ENCODE measurements at regions of chr20 and their contacts with region 1.

Region 1: DNA sequence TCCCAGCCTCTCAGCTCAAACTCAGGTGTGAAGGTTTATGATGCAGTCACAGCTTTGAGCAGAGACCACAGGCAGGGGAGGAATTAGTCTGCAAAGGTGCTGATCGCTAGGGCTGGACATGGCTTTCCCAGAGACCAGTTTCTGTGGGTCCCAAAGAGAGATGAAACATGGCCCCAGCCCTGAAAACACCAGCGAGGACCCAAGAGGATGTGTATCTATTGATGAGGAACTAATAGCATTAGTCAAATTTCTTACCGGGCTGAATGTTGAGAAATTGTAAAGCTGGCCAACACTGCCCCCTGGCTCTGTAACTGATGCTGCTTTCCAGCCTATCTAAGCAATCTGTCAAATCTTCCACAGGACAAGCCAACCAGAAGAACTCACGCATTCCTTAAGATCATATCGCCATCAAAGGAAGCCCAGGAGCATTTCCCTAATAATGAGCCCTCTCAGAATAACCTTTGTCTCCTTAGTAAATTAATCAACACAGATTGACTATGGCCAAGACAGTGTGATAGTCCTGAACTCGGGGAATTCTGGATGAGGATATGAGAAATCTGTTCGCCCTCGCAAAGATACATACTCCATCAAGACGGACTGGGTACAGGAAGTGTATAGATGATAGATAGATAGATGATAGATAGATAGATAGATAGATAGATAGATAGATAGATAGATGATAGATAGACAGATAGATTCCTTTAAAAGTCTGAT is 7.8 kb upstream of the ACSS1 start:
- DNase-seq: peak; percentile 57
- ATAC-seq: peak; percentile 72
- H3K4me3 Mint-ChIP-seq: no peak overlapping the region
- H3K27ac Mint-ChIP-seq: no peak overlapping the region
- H3K4me1 Mint-ChIP-seq: peaks cover 3% of the 10 kb centered on the region; the same call in 1 of the 2 replicates
- H3K27me3 Mint-ChIP-seq: peaks cover 15% of the 10 kb centered on the region
- CTCF ChIP-seq: peak; percentile 48; the same call in 1 of the 2 replicates

Region 2: DNA sequence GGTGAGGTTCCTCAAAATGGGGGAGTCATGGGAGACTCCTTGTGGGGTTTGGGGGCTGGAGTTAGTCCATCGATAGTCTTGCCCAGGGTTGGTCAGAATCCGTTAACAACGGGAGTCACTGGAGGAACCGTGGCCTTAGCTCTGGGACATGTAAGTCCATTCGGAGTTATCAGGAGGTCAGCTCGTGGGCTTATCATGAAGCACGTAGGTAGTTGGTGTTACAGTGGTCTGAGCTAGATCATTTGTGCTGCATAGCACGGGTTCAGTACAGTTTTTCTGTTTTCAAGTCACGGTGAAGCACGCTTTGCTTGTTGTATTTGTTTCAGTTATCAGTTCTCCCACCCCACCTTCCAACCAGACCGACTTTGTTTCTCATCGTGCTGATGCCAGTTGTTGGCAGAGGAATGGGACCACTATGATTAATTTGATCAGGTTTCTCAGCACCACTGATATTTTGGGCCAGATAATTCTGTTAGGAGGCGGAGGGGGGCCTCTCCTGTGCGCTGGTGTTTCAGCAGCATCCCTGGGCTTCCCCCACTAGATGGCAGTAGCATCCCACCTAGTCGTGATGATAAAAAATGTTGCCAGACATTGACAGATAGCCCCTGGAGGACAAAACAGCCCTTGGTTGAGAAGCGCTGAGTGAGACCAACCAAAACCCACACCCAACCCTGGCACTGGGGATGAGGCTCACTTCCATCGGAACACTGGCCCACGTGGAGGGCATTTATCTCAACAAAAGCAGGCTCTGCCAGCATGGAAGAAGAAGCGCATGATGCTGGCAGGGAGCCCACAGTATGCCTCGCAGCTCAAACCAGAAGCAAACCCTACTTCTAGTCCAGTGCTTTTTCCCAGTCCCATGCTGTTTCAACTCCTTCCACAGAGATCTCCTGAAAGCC is 71.1 kb before region 1 on chr20:
- CTCF ChIA-PET with region 1: interaction called, 26 read pairs
- POLR2A ChIA-PET with region 1: no interaction called
- DNase-seq: peak; percentile 84
- ATAC-seq: peak; percentile 32
- H3K4me3 Mint-ChIP-seq: no peak overlapping the region
- H3K27ac Mint-ChIP-seq: no peak overlapping the region
- H3K4me1 Mint-ChIP-seq: peaks cover 30% of the 10 kb centered on the region
- H3K27me3 Mint-ChIP-seq: no peaks in the 10 kb centered on the region; the same call in none of the 2 replicates
- CTCF ChIP-seq: peak; percentile 69

Region 3: GRCh38 chr20:25076731-25077609 is 11.2 kb after region 1 on chr20:
- CTCF ChIA-PET with region 1: interaction called, 10 read pairs
- POLR2A ChIA-PET with region 1: no interaction called
- DNase-seq: no peak
- ATAC-seq: peak; percentile 13; the same call in 1 of the 2 replicates
- H3K4me3 Mint-ChIP-seq: peak overlapping the region; percentile 64
- H3K27ac Mint-ChIP-seq: no peak overlapping the region
- H3K4me1 Mint-ChIP-seq: peaks cover 13% of the 10 kb centered on the region
- H3K27me3 Mint-ChIP-seq: peaks cover 51% of the 10 kb centered on the region
- CTCF ChIP-seq: no peak

Region 4: GRCh38 chr20:25100914-25101313 is 35.1 kb after region 1 on chr20:
- CTCF ChIA-PET with region 1: no interaction called
- POLR2A ChIA-PET with region 1: no interaction called
- DNase-seq: no peak
- ATAC-seq: no peak
- H3K4me3 Mint-ChIP-seq: no peak overlapping the region
- H3K27ac Mint-ChIP-seq: no peak overlapping the region
- H3K4me1 Mint-ChIP-seq: no peaks in the 10 kb centered on the region
- H3K27me3 Mint-ChIP-seq: peaks cover 5% of the 10 kb centered on the region
- CTCF ChIP-seq: no peak